HepG2 (cell line): ENCODE measurements at regions of chr12 and their contacts with region 1.

Region 1: GRCh38 chr12:106841510-106842302 is 67.2 kb downstream of the RIC8B start:
- DNase-seq: peak; percentile 30
- ATAC-seq: peak; percentile 71
- H3K4me3 ChIP-seq: no peak overlapping the region
- H3K27ac ChIP-seq: peak overlapping the region; percentile 9
- H3K4me1 ChIP-seq: peaks cover 26% of the 10 kb centered on the region
- H3K27me3 ChIP-seq: no peaks in the 10 kb centered on the region
- CTCF ChIP-seq: peak; percentile 68
- EP300 ChIP-seq: no peak
- POLR2A ChIP-seq: no peak
- RAD21 ChIP-seq: peak; percentile 36; the same call in 1 of the 2 replicates

Region 2: GRCh38 chr12:106386813-106387535 is 454.7 kb before region 1 on chr12:
- CTCF ChIA-PET with region 1: interaction called, 9 read pairs
- POLR2A ChIA-PET with region 1: no interaction called
- in situ Hi-C with region 1: loop called (anchors 10 kb)
- intact Hi-C with region 1: loop called (anchors 1 kb)
- DNase-seq: no peak
- ATAC-seq: no peak
- H3K4me3 ChIP-seq: no peak overlapping the region
- H3K27ac ChIP-seq: no peak overlapping the region
- H3K4me1 ChIP-seq: no peaks in the 10 kb centered on the region
- H3K27me3 ChIP-seq: no peaks in the 10 kb centered on the region
- CTCF ChIP-seq: no peak
- EP300 ChIP-seq: no peak
- POLR2A ChIP-seq: no peak
- RAD21 ChIP-seq: no peak

Region 3: DNA sequence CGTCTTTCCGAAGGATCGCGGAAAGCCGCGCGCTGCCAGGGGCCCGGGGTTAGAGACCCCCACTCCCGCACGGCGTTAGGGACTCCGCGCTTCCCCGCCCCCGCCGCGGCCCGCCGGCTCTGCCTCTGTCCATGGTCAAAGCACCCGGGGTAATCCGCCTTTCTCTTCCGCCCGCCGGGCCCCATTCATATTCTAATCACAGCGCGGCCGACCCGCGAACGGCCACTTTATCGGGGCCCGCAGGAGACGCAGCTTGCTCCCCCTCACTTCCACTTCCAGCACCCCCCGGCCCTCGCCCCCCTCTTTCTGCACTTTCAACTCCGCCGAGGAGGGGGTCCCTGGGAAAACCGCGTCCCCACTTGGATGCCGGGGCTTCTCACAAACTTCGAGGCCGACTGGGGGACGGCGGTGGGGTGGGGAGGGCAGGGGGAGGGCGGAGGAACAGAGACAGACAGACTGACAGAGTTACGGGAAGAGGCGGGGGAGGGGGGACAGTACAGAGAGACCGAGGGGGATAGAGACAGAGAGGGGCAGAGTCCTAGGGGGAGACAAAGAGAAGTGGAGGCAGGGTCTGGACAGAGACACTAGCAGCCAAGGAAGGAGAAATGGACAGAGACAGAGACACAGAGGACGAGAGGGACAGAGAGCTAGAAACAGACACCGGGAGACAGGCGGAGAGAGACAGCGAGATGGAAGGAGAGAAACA is 260.0 kb before region 1 on chr12:
- CTCF ChIA-PET with region 1: no interaction called
- POLR2A ChIA-PET with region 1: no interaction called
- in situ Hi-C with region 1: no loop called
- intact Hi-C with region 1: no loop called
- DNase-seq: no peak
- ATAC-seq: peak; percentile 62
- H3K4me3 ChIP-seq: no peak overlapping the region; a peak in 1 of 6 replicates
- H3K27ac ChIP-seq: no peak overlapping the region
- H3K4me1 ChIP-seq: no peaks in the 10 kb centered on the region
- H3K27me3 ChIP-seq: peaks cover 19 to 75% of the 10 kb centered on the region in 2 experiments
- CTCF ChIP-seq: no peak
- EP300 ChIP-seq: no peak
- POLR2A ChIP-seq: no peak
- RAD21 ChIP-seq: no peak

Region 4: DNA sequence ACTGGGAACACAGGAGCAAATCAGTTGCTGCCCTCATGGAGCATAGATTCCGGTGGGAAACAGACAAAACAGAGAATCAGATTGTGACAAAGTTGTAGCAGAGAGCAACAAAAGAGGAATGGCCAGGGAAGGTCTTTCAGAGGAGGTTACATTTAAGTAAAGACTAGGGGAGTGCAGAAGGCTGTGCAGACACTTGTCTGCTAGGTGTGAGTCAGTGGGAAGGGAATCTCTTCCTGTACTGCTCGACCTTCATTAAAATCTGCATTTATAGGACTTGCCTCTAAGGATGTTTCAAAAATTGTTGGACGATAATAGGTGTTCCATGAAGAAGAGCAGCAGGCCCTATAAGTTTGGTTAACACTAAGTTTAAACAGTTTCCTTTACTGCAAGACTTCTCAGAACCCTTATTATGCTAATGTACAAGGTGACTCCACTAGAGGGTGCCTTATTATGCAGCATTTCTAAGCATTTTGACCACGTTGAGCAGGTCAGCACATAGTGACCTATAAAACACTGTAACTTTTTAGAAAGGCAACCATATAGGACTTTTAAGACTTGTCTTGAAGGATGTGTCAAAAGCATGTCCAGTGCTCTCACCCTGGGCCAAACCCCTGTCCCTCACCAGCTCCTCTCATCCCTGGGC is 159.0 kb before region 1 on chr12:
- CTCF ChIA-PET with region 1: no interaction called
- POLR2A ChIA-PET with region 1: no interaction called
- in situ Hi-C with region 1: no loop called
- intact Hi-C with region 1: loop called (anchors 1 kb)
- DNase-seq: peak; percentile 8
- ATAC-seq: peak; percentile 57
- H3K4me3 ChIP-seq: no peak overlapping the region
- H3K27ac ChIP-seq: no peak overlapping the region
- H3K4me1 ChIP-seq: peaks cover 6% of the 10 kb centered on the region; the same call in 1 of the 2 replicates
- H3K27me3 ChIP-seq: no peaks in the 10 kb centered on the region
- CTCF ChIP-seq: peak; percentile 31
- EP300 ChIP-seq: no peak
- POLR2A ChIP-seq: no peak
- RAD21 ChIP-seq: no peak

Region 5: DNA sequence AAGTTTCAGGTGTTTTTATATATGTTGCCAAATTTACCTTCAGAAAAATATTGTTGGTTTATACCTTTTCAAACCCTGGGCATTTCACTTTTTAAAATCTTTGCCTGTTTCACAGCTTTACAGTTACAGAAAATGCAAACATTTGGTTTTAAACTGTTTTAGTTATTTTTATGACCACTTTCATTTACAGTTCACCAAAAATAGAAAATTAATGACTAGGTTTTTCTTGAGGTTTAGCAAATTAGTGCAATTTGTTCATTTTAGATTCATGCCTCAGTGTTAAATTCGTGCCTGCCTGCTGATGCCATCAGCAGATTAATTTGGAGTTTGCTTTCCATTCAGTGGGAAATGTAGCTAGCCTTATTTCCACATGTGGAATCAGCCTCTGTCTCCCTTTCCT is 21.7 kb before region 1 on chr12:
- CTCF ChIA-PET with region 1: no interaction called
- POLR2A ChIA-PET with region 1: no interaction called
- in situ Hi-C with region 1: no loop called
- intact Hi-C with region 1: no loop called
- DNase-seq: no peak
- ATAC-seq: no peak
- H3K4me3 ChIP-seq: no peak overlapping the region
- H3K27ac ChIP-seq: no peak overlapping the region
- H3K4me1 ChIP-seq: no peaks in the 10 kb centered on the region
- H3K27me3 ChIP-seq: no peaks in the 10 kb centered on the region
- CTCF ChIP-seq: no peak
- EP300 ChIP-seq: no peak
- POLR2A ChIP-seq: no peak
- RAD21 ChIP-seq: no peak